H1 (cell line): ENCODE measurements at regions of chr21 and their contacts with region 1.

Region 1: GRCh38 chr21:36087362-36088138 is 17.7 kb downstream of the CBR1 start:
- DNase-seq: no peak
- H3K4me3 ChIP-seq: no peak overlapping the region
- H3K27ac ChIP-seq: no peak overlapping the region
- H3K4me1 ChIP-seq: no peaks in the 10 kb centered on the region; a peak in 1 of 7 replicates
- H3K27me3 ChIP-seq: no peaks in the 10 kb centered on the region
- CTCF ChIP-seq: peak; percentile 47 to 63 (median 61)
- EP300 ChIP-seq: no peak
- POLR2A ChIP-seq: no peak
- RAD21 ChIP-seq: peak in 1 of 2 experiments; percentile 46; a peak in 1 of 4 replicates

Region 2: DNA sequence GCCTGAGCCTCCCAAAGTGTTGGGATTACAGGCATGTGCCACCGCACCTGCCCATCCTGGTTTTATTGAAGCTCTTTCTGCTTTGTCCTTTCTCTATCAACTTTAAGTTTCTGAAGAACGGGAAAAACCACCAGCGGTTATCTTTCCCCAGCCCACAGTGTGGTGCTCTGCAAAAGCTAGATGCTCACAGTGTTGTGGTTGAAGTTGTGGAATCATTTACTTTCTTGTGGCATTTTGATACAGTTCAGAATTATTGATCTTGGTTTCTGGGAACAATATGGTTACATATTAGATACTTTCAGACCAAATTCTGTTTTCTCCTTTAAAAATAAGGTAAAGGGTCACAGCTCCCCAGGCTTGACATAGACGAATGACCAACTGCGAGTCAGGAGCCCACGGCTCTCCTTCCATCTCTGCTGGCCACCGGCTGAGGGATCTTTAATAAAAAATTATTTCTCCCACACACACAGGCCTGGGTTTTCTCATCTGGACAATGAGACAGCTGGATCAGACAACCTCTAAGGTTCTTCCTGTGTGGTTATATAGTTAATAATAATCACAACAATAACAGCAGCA is 412.6 kb before region 1 on chr21:
- CTCF ChIA-PET with region 1: no interaction called
- POLR2A ChIA-PET with region 1: no interaction called
- DNase-seq: no peak
- H3K4me3 ChIP-seq: no peak overlapping the region
- H3K27ac ChIP-seq: no peak overlapping the region
- H3K4me1 ChIP-seq: no peaks in the 10 kb centered on the region
- H3K27me3 ChIP-seq: no peaks in the 10 kb centered on the region
- CTCF ChIP-seq: no peak
- EP300 ChIP-seq: no peak
- POLR2A ChIP-seq: no peak
- RAD21 ChIP-seq: peak in 1 of 2 experiments; percentile 11; a peak in 1 of 4 replicates

Region 3: GRCh38 chr21:35909456-35910223 is 177.9 kb before region 1 on chr21:
- CTCF ChIA-PET with region 1: no interaction called
- POLR2A ChIA-PET with region 1: no interaction called
- DNase-seq: no peak
- H3K4me3 ChIP-seq: no peak overlapping the region
- H3K27ac ChIP-seq: no peak overlapping the region
- H3K4me1 ChIP-seq: peaks cover 0 to 2% (median 0%) of the 10 kb centered on the region in 4 experiments; a peak in 2 of 7 replicates
- H3K27me3 ChIP-seq: no peaks in the 10 kb centered on the region
- CTCF ChIP-seq: no peak
- EP300 ChIP-seq: no peak
- POLR2A ChIP-seq: no peak
- RAD21 ChIP-seq: no peak

Region 4: GRCh38 chr21:36069713-36070573 is 17.6 kb before region 1 on chr21 and contains the start of gene CBR1:
- CTCF ChIA-PET with region 1: interaction called, 48 read pairs
- POLR2A ChIA-PET with region 1: interaction called, 3 read pairs
- DNase-seq: peak in 1 of 2 experiments; percentile 34
- H3K4me3 ChIP-seq: peak within 1 kb of the TSS; percentile 46 to 92 (median 64)
- H3K27ac ChIP-seq: no peak within 1 kb of the TSS
- H3K4me1 ChIP-seq: peaks cover 0 to 4% (median under 1%) of the 10 kb centered on the region in 4 experiments; a peak in 6 of 7 replicates
- H3K27me3 ChIP-seq: peaks cover 0 to 1% (median 0%) of the 10 kb centered on the region in 4 experiments; a peak in 1 of 7 replicates
- CTCF ChIP-seq: no peak
- EP300 ChIP-seq: no peak
- POLR2A ChIP-seq: no peak
- RAD21 ChIP-seq: no peak
- total RNA-seq, gene CBR1: 1.8 and 2.3 TPM in 2 replicates

Region 5: GRCh38 chr21:36104317-36105300 is 17.1 kb after region 1 on chr21:
- CTCF ChIA-PET with region 1: interaction called, 14 read pairs
- POLR2A ChIA-PET with region 1: interaction called, 5 read pairs
- DNase-seq: peak; percentile 51 to 92
- H3K4me3 ChIP-seq: peak overlapping the region; percentile 42 to 82 (median 66)
- H3K27ac ChIP-seq: peak overlapping the region; percentile 61; the same call in 1 of the 2 replicates
- H3K4me1 ChIP-seq: peaks cover 0 to 17% (median 6%) of the 10 kb centered on the region in 4 experiments; a peak in 5 of 7 replicates
- H3K27me3 ChIP-seq: no peaks in the 10 kb centered on the region
- CTCF ChIP-seq: peak; percentile 66 to 71 (median 69)
- EP300 ChIP-seq: no peak; a peak in 1 of 3 replicates
- POLR2A ChIP-seq: no peak
- RAD21 ChIP-seq: peak; percentile 59 to 78

Region 6: DNA sequence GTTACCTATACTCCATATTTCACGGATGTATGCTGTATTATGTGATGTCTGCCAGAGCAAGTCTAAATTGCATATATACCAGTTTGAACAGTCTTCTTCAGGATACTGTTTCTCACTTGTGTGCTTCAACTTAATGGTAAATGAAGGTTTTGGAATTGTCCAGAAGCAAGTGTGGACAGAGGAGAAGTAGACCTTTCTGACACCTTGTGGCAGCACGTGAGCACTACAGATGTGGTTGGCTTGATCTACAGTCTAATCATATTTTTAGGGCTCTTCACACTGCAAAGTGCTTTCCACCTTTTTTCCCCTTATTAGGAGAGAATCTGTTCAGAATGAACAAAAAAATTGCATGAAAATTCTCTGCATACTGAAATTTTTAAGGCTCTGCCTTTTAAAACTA is 243.4 kb after region 1 on chr21:
- CTCF ChIA-PET with region 1: no interaction called
- POLR2A ChIA-PET with region 1: no interaction called
- DNase-seq: no peak
- H3K4me3 ChIP-seq: no peak overlapping the region
- H3K27ac ChIP-seq: no peak overlapping the region
- H3K4me1 ChIP-seq: no peaks in the 10 kb centered on the region
- H3K27me3 ChIP-seq: no peaks in the 10 kb centered on the region
- CTCF ChIP-seq: peak in 2 of 3 experiments; percentile 66 to 81; a peak in 3 of 4 replicates
- EP300 ChIP-seq: no peak
- POLR2A ChIP-seq: no peak
- RAD21 ChIP-seq: peak; percentile 76 to 77